PC-9 (cell line): ENCODE measurements at regions of chr18 and their contacts with region 1.

Region 1: GRCh38 chr18:39841482-39842365 is 2113.3 kb upstream of the PIK3C3 start:
- DNase-seq: peak; percentile 41 to 56
- H3K4me3 ChIP-seq: peak overlapping the region; percentile 62
- H3K27ac ChIP-seq: no peak overlapping the region
- H3K4me1 ChIP-seq: peaks cover 8% of the 10 kb centered on the region; the same call in 1 of the 2 replicates
- H3K27me3 ChIP-seq: no peaks in the 10 kb centered on the region
- CTCF ChIP-seq: no peak; the same call in 1 of the 2 replicates

Region 2: DNA sequence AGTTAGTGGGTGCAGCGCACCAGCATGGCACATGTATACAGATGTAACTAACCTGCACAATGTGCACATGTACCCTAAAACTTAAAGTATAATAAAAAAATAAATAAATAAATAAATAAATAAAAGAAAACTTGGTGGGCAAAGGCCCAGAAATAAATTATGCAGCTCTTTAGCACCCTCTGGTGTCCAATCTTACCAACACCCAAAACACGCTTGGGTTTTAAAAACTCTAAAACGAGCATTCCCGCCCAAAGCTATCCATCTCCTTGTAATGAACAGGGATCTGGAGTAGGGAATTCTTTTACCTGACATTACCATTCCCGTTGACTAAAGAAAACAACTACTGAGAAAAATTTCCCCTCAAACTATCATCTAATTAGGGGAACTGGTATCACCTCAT is 270.2 kb before region 1 on chr18:
- CTCF ChIA-PET with region 1: no interaction called
- POLR2A ChIA-PET with region 1: no interaction called
- intact Hi-C with region 1: loop called (anchors 5 kb)
- DNase-seq: peak in 1 of 2 experiments; percentile 1
- H3K4me3 ChIP-seq: no peak overlapping the region
- H3K27ac ChIP-seq: no peak overlapping the region
- H3K4me1 ChIP-seq: no peaks in the 10 kb centered on the region
- H3K27me3 ChIP-seq: no peaks in the 10 kb centered on the region
- CTCF ChIP-seq: peak; percentile 59